ENCODE measurements at regions of chr9 and their contacts with region 1.

Region 1: DNA sequence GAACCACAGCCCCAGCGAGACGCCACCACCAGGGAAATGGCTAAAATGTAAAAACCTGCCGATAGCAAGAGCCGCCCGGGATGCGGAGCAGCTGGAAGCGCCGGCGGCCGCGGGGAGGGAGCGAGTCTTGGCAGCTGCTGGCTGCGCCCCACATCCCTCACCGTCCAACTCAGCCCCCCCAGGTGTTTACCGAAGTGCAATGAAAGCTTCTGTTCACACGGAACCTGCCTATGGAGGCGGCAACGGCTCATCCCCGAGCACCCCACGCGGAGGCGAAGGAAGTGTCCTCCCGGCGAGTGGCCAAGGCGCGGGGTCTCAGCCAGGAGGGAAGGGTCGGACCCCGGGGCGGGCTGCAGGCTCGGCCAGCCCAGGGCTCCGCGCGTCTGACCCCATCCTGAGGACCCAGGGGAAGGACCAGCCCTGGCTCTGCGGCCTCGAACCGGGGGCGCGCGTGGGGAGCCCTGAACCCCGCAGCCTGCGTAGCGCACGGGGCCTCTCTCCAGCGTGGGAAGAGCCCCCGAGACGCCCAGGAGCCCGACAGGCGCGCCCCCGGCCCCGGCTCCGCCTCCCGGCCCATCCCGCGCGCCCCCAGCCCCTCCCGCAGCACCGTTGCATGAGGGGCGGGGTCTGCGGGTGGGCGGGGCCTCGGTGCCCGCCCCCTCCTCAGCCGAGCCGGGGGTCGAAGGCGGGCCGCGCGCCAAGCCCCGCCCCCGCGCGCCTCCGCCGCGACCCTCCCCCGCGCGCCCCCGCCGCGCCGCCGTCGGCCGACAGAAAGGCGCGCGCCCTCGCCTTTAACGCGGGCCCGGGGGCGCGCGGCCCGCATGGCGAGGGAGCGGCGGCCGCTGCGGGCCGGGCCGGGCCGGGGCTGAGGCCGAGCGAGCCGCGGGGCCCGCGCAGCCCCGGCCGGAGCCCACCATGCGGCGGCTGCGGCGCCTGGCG is at the start of gene DIPK1B:
- DNase-seq: peak; percentile 48
- H3K4me3 ChIP-seq: peak within 1 kb of the TSS; percentile 68 to 81 (median 75)
- H3K27ac ChIP-seq: peak within 1 kb of the TSS; percentile 96
- H3K4me1 ChIP-seq: peaks cover 27% of the 10 kb centered on the region
- H3K27me3 ChIP-seq: no peaks in the 10 kb centered on the region
- CTCF ChIP-seq: no peak
- POLR2A ChIP-seq: no peak
- total RNA-seq, gene DIPK1B: 242 and 253 TPM in 2 replicates

Region 2: DNA sequence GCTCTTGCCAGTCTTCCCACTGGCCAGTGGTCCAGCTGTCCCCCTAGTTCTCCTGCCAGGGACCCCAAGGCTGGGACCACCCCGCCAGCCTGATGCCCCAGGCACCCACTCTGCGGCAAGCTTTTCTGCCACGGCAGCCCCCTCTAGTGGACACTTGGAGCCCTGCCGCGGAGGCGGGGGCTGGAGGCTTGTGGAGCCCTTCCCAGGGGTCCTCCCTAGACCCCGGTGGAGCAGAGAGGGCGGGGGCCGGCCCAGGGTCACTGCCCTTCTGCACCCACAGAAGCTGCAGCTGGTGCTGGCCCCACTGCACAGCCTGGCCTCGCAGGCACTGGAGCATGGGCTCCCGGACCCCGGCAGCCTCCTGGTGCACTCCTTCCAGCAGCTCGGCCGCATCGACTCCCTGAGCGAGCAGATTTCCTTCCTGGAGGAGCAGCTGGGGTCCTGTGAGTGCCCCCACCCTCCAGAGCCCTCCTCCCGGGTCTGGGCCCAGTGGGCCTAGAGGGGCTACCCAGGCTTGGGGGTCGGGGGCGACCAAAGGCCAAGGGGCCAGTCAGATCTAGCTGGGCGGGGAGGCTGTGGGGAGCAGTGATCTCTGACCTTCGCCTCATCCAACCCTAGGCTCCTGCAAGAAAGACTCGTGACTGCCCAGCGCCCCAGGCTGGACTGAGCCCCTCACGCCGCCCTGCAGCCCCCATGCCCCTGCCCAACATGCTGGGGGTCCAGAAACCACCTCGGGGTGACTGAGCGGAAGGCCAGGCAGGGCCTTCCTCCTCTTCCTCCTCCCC is 40.2 kb before region 1 on chr9:
- CTCF ChIA-PET with region 1: interaction called, 4 read pairs
- POLR2A ChIA-PET with region 1: interaction called, 3 read pairs
- dilution Hi-C with region 1: no loop called
- intact Hi-C with region 1: loop called (anchors 5 kb)
- DNase-seq: peak; percentile 62
- H3K4me3 ChIP-seq: peak overlapping the region in 1 of 3 experiments; percentile 3
- H3K27ac ChIP-seq: no peak overlapping the region
- H3K4me1 ChIP-seq: peaks cover 15% of the 10 kb centered on the region
- H3K27me3 ChIP-seq: no peaks in the 10 kb centered on the region
- CTCF ChIP-seq: peak; percentile 77 to 83
- POLR2A ChIP-seq: peak; percentile 88

Region 3: DNA sequence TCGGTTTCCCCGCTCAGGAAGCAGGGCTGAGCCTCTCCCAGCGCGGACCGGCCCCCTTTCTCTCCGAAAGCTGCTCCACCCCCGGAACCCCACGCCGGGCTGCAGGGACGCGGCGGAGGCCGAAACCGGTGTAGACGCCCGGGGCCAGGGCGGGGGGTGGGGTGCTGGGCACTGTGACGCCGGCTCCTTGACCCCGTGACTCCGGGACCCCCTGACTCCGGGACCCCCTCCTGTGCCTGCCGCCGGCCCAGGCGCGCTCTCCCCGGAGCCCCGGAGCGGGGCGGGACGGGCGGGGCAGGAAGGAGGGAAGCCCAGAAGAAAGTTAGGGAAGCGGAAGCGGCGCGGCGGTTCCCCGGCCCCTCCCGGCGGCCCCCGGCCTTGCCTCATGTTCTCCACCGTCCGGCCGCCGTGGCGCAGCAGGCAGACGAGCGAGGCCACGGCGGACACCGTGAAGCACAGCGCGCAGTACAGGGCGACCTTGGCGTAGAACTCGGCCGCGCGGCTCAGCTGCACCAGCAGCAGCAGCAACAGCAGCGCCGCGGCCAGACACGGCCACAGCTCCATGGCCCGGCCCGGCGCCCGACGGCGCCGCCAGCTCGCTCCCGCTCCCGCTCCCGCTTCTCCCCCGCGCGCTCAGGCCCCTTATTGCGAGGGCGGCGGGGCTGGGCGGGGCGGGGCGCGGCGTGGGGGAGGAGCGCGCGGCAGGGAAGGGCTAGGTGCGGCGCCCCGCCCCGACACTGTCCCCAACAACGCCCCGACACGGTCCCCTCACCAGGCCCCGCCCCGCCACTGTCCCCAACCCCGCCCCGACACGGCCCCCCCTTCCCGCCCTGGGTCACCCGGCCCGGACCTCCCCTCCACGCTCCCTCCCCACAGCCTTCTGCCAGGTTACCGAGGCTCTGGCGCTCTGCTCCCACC is 25.0 kb before region 1 on chr9 and contains the start of gene AGPAT2:
- CTCF ChIA-PET with region 1: interaction called, 7 read pairs
- POLR2A ChIA-PET with region 1: interaction called, 7 read pairs
- dilution Hi-C with region 1: no loop called
- intact Hi-C with region 1: loop called (anchors 2 kb)
- DNase-seq: peak; percentile 43
- H3K4me3 ChIP-seq: peak within 1 kb of the TSS; percentile 59 to 79 (median 75)
- H3K27ac ChIP-seq: peak within 1 kb of the TSS; percentile 24
- H3K4me1 ChIP-seq: peaks cover 13% of the 10 kb centered on the region
- H3K27me3 ChIP-seq: no peaks in the 10 kb centered on the region
- CTCF ChIP-seq: no peak
- POLR2A ChIP-seq: peak; percentile 49
- total RNA-seq, gene AGPAT2: 43.0 and 45.5 TPM in 2 replicates

Measured in endothelial cell of umbilical vein (primary cell).